ENCODE measurements at regions of chr11 and their contacts with region 1.

Region 1: DNA sequence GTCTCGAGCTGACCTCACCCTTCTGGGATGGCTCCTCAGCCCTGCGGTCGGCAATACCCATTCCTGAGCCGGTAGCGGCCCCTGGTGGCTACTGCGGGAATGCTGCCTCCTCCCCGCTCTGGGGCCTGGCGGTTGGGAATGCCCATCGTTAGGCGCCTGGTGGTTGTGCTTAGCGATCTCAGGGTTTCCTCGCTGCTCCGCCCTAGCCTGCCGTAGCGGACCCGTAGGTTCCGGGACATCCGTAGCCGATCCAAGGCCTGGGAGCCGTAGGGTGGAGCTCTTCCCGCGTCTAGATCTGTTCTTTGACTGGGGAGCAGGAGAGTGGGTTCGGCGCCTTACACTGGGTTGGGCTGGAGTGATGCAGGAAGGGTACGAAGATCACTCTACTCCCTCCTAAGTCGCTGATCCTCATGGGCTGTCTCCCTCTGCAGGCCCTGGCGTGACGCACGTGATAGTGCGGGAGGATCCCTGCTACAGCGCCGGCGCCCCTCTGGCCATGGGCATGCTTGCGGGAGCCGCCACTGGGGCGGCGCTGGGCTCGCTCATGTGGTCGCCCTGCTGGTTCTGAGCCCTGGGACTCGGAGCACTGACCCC is 14.8 kb downstream of the PLEKHB1 start:
- DNase-seq: peak; percentile 87 to 95 (median 92)
- ATAC-seq: peak; percentile 97
- H3K4me3 ChIP-seq: no peak overlapping the region
- H3K4me1 ChIP-seq: peaks cover 10% of the 10 kb centered on the region
- CTCF ChIP-seq: peak; percentile 94

Region 2: DNA sequence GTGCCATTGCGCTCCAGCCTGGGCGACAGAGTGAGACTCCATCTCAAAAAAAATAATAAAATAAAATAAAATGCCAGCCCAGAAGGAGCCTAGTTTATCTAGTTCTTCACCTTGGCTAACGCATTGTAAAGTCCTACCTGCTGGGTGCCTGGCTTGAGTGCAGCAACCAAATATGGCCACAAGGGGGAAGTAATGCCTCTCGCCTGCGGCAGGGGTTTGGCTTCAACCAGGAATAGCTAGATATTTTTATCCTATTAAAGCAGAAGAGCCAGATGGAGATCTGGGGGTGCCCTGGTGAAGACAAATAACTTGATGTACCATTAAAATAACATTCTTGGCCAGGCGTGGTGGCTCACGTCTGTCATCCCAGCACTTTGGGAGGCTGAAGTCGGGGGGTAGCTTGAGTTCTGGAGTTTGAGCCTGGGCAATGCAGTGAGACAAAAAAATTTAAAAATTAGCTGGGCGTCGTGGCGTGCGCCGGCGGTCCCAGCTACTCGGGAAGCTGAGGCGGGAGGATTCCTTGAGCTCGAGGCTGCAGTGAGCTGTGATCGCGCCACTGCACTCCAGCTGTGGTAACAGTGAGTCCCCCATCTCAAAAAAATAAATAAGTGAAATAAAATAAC is 35.3 kb before region 1 on chr11:
- intact Hi-C with region 1: loop called in 1 of 2 experiments (anchors 5 kb)
- DNase-seq: peak; percentile 60 to 83 (median 76)
- ATAC-seq: peak; percentile 95
- H3K4me3 ChIP-seq: no peak overlapping the region
- H3K4me1 ChIP-seq: no peaks in the 10 kb centered on the region
- CTCF ChIP-seq: peak; percentile 92